GM12878 (cell line): ENCODE measurements at regions of chr7 and their contacts with region 1.

Region 1: DNA sequence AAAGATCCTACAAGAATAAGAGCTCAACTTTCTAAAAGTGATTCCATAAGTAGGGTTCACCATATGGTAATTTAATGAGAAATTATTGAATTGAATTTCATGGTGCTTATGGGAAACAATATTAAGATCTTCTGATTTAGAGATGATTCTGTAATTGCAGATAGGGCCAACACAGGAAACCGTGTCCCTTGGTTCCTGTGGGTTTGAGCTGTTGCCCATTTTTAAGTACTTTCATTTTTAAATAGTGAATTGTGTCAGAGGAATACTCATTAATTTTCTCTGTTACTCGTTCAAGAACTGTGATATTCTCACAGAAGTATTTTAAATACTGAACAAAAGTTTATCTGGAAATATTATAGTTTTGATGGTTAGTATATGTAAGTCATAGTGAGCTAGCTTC is 129.2 kb downstream of the SRI start:
- DNase-seq: no peak
- ATAC-seq: peak; percentile 87
- H3K4me3 ChIP-seq: no peak overlapping the region
- H3K27ac ChIP-seq: no peak overlapping the region
- H3K4me1 ChIP-seq: no peaks in the 10 kb centered on the region; the same call in 1 of the 2 replicates
- H3K27me3 ChIP-seq: no peaks in the 10 kb centered on the region
- CTCF ChIP-seq: no peak
- EP300 ChIP-seq: no peak
- POLR2A ChIP-seq: no peak
- RAD21 ChIP-seq: no peak

Region 2: GRCh38 chr7:87833130-87833529 is 257.5 kb before region 1 on chr7:
- CTCF ChIA-PET with region 1: no interaction called
- POLR2A ChIA-PET with region 1: no interaction called
- RAD21 ChIA-PET with region 1: no interaction called
- SMC1A ChIA-PET with region 1: no interaction called
- in situ Hi-C with region 1: no loop called
- intact Hi-C with region 1: no loop called
- DNase-seq: no peak
- ATAC-seq: no peak
- H3K4me3 ChIP-seq: no peak overlapping the region
- H3K27ac ChIP-seq: no peak overlapping the region
- H3K4me1 ChIP-seq: no peaks in the 10 kb centered on the region
- H3K27me3 ChIP-seq: no peaks in the 10 kb centered on the region
- CTCF ChIP-seq: no peak
- EP300 ChIP-seq: no peak
- POLR2A ChIP-seq: no peak
- RAD21 ChIP-seq: no peak

Region 3: DNA sequence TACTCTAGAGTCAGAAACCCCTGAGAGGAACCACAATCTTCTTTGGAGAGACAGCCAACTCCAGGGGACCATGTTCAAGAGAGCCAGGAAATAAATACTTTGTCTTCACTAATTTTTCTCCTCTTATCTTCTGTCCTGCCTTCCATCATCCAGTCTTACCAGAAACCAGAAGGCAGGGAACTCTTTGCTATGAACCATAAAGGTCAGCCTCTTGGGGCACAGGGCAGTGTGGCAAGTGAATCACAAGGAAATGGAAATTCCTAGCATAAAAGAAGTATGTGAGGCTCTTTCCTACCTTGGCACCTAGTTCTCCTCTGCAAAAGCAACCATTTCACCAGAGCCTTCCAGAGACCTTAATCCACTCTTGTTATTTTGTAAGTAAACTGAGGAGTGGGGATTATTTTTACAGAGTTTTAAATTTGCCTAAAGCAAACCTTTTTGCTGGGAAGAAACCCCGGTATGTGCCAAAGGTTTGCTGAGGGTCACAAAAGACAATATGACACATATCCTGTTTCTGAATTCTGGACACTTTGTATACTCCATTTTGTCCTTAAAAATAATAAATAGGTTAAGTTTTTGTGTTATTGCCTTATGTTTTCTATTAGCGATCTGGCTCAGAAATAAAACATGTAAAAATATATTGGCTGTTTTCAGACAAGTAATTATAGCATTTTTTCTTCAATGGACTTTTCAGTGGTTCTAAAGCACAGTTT is 69.6 kb before region 1 on chr7:
- CTCF ChIA-PET with region 1: no interaction called
- POLR2A ChIA-PET with region 1: no interaction called
- RAD21 ChIA-PET with region 1: no interaction called
- SMC1A ChIA-PET with region 1: no interaction called
- in situ Hi-C with region 1: no loop called
- intact Hi-C with region 1: loop called (anchors 2 kb)
- DNase-seq: no peak
- ATAC-seq: no peak
- H3K4me3 ChIP-seq: no peak overlapping the region
- H3K27ac ChIP-seq: no peak overlapping the region
- H3K4me1 ChIP-seq: no peaks in the 10 kb centered on the region
- H3K27me3 ChIP-seq: no peaks in the 10 kb centered on the region
- CTCF ChIP-seq: no peak
- EP300 ChIP-seq: no peak
- POLR2A ChIP-seq: no peak
- RAD21 ChIP-seq: no peak

Region 4: GRCh38 chr7:88101769-88102168 is 11.1 kb after region 1 on chr7:
- CTCF ChIA-PET with region 1: interaction called, 6 read pairs
- POLR2A ChIA-PET with region 1: interaction called, 3 read pairs
- RAD21 ChIA-PET with region 1: interaction called, 8 read pairs
- SMC1A ChIA-PET with region 1: interaction called, 18 read pairs
- in situ Hi-C with region 1: no loop called
- intact Hi-C with region 1: no loop called
- DNase-seq: no peak
- ATAC-seq: peak; percentile 70
- H3K4me3 ChIP-seq: no peak overlapping the region
- H3K27ac ChIP-seq: no peak overlapping the region
- H3K4me1 ChIP-seq: peaks cover 7% of the 10 kb centered on the region; the same call in 1 of the 2 replicates
- H3K27me3 ChIP-seq: no peaks in the 10 kb centered on the region
- CTCF ChIP-seq: no peak
- EP300 ChIP-seq: no peak
- POLR2A ChIP-seq: no peak
- RAD21 ChIP-seq: no peak